Activated CD4-positive, alpha-beta memory T cell treated with anti-CD3 and anti-CD28 coated beads, Interleukin-2, amount 10 ng/mL, durations not matched to agents 7 days and 5 days (primary cell): ENCODE measurements at regions of chr3 and their contacts with region 1.

Region 1: DNA sequence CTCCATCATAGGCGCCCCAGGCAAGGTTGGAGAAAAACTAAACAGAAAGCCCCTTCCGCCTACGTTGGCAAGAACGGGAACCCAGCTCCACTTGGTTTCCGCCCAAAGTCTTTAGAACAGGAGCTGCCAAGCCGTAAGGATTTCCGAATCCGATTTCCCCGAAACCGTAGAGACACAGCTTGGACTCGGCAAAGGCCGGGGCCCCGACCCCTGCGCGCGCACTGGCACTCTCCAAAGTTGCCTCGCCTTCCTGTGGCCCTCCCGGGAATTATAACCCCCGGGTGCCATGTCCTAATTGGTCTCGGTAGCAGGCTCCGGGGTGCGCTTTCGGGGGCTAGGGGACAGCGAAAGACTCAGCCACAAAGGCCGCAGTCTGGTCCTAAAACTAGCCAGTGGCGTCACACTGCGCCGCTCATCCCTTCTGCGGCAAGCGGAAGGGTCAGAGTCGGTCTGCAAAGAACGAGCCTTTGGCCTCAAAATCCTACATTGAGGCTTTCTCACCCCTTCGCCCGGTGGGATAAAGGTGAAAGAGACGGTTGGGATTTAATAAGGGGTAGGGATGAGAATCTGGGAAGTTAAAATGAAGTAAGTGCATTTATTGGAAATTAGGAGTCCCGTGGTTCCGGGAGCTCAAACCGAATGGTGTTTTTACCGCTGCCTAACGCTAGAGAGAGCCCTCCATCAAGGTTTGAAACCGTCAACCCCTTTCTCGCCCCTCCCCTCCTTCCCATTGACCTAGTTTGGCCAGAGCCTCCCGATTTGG is 6.8 kb downstream of the BCL6 start:
- DNase-seq: peak; percentile 77
- H3K4me3 Mint-ChIP-seq: peak overlapping the region; percentile 89
- H3K27ac Mint-ChIP-seq: peak overlapping the region; percentile 99
- H3K4me1 Mint-ChIP-seq: peaks cover 48% of the 10 kb centered on the region
- H3K27me3 Mint-ChIP-seq: peaks cover 3% of the 10 kb centered on the region

Region 2: GRCh38 chr3:187702507-187703033 is 35.9 kb before region 1 on chr3 and contains the start of gene RTP2:
- CTCF ChIA-PET with region 1: no interaction called
- POLR2A ChIA-PET with region 1: no interaction called
- DNase-seq: no peak
- H3K4me3 Mint-ChIP-seq: no peak within 1 kb of the TSS
- H3K27ac Mint-ChIP-seq: no peak within 1 kb of the TSS
- H3K4me1 Mint-ChIP-seq: no peaks in the 10 kb centered on the region
- H3K27me3 Mint-ChIP-seq: peaks cover 5% of the 10 kb centered on the region
- total RNA-seq, gene RTP2: not detected

Region 3: DNA sequence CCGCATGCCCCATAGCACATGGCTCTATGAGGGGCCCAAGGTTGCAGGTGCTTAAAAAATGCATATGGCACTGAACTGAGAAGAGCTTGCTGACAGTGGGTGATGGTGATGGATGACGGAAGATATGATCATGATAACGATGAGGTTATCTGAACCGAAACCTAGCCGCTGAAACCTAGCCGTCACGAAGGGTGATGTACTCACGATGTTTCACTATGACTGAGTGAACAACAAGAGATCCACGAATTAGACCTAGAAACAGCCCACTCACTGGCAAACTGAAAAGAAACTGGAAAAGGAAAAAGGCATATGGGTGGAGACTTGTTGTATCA is 64.4 kb after region 1 on chr3:
- CTCF ChIA-PET with region 1: interaction called, 62 read pairs
- POLR2A ChIA-PET with region 1: interaction called, 251 read pairs
- DNase-seq: peak; percentile 88
- H3K4me3 Mint-ChIP-seq: peak overlapping the region; percentile 61
- H3K27ac Mint-ChIP-seq: peak overlapping the region; percentile 85
- H3K4me1 Mint-ChIP-seq: peaks cover 94% of the 10 kb centered on the region
- H3K27me3 Mint-ChIP-seq: no peaks in the 10 kb centered on the region

Region 4: GRCh38 chr3:188051801-188052168 is 313.3 kb after region 1 on chr3:
- CTCF ChIA-PET with region 1: interaction called, 12 read pairs
- POLR2A ChIA-PET with region 1: interaction called, 15 read pairs
- DNase-seq: no peak
- H3K4me3 Mint-ChIP-seq: no peak overlapping the region
- H3K27ac Mint-ChIP-seq: no peak overlapping the region
- H3K4me1 Mint-ChIP-seq: peaks cover 20% of the 10 kb centered on the region
- H3K27me3 Mint-ChIP-seq: no peaks in the 10 kb centered on the region

Region 5: GRCh38 chr3:188279502-188280335 is 541.2 kb after region 1 on chr3:
- CTCF ChIA-PET with region 1: interaction called, 15 read pairs
- POLR2A ChIA-PET with region 1: no interaction called
- DNase-seq: no peak
- H3K4me3 Mint-ChIP-seq: no peak overlapping the region
- H3K27ac Mint-ChIP-seq: no peak overlapping the region
- H3K4me1 Mint-ChIP-seq: peaks cover 16% of the 10 kb centered on the region
- H3K27me3 Mint-ChIP-seq: no peaks in the 10 kb centered on the region

Region 6: DNA sequence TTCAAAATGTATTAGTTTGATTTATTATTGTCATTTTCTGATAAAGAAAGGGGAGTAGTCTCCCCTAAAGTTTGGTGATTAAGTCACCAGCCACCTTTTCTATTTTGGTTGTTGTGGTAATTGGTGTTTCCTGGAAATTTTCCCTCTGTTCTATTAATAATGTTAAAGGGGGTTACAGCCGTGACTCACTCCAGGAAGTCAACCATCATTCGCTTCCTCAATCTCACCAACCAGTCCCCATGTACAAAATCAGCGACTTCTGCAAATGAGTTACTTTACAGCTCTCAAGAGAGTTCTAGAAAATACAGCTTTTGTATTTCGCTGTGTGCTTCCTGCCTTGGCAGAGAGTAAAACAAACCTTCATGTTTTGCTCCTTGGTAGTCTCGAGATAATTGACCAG is 700.6 kb after region 1 on chr3:
- CTCF ChIA-PET with region 1: interaction called, 14 read pairs
- POLR2A ChIA-PET with region 1: interaction called, 5 read pairs
- DNase-seq: peak; percentile 53
- H3K4me3 Mint-ChIP-seq: peak overlapping the region; percentile 30
- H3K27ac Mint-ChIP-seq: peak overlapping the region; percentile 80
- H3K4me1 Mint-ChIP-seq: peaks cover 48% of the 10 kb centered on the region
- H3K27me3 Mint-ChIP-seq: no peaks in the 10 kb centered on the region

Region 7: DNA sequence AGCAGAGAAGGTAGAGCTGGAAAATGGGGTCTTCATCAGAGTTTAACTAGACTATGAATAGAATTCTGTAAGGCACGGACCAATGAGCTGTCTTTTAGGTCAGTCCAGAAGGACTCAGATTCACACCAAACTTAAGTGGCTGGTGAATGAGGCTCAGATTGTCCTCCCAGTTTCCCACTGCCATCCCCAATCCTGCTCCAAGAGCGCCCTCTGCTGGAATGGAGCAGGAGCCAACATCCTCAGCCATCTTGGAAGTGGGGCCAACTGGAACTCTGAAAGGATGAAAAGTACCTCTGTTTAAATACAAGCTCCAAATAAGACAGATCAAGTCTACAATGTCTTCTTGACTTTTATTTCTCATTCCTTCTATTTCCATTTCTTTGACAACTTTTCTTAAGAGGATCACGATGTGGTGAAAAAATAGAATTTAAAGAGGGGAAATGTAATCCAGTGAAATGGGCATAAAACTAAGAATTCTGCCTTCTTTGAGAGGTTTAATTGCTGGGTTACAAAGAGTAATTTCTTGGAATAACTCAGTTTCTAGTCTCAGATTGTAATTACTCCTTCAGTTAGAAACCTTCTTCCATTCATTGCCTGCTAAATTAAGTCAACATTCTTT is 1216.2 kb after region 1 on chr3:
- CTCF ChIA-PET with region 1: interaction called, 493 read pairs
- POLR2A ChIA-PET with region 1: interaction called, 57 read pairs
- DNase-seq: peak; percentile 82
- H3K4me3 Mint-ChIP-seq: no peak overlapping the region
- H3K27ac Mint-ChIP-seq: no peak overlapping the region
- H3K4me1 Mint-ChIP-seq: peaks cover 11% of the 10 kb centered on the region
- H3K27me3 Mint-ChIP-seq: peaks cover 2% of the 10 kb centered on the region

Region 8: DNA sequence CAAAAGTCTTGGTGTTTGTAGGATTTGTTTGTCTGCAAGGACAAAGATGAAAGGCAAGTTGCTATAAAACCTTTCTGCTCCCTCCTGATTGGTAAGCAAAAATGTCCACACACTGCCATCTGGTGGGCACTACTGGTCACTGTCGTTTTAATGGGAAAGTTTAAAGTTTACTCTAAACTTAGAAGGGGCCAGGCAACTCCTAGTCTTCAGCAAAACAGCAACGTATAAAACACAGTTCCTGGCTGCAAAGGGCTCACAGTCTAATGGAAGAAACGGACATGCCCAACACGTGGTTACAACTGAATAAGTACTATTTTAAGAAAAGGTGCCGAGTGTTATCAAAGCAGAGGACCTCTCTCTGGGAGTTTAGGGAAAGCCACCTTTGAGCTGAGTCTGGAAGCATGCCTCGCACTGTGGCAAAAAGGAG is 1409.6 kb after region 1 on chr3:
- CTCF ChIA-PET with region 1: interaction called, 167 read pairs
- POLR2A ChIA-PET with region 1: interaction called, 13 read pairs
- DNase-seq: peak; percentile 75
- H3K4me3 Mint-ChIP-seq: no peak overlapping the region
- H3K27ac Mint-ChIP-seq: no peak overlapping the region
- H3K4me1 Mint-ChIP-seq: peaks cover 42% of the 10 kb centered on the region
- H3K27me3 Mint-ChIP-seq: no peaks in the 10 kb centered on the region